Caco-2 (cell line): ENCODE measurements at regions of chr17 and their contacts with region 1.

Region 1: DNA sequence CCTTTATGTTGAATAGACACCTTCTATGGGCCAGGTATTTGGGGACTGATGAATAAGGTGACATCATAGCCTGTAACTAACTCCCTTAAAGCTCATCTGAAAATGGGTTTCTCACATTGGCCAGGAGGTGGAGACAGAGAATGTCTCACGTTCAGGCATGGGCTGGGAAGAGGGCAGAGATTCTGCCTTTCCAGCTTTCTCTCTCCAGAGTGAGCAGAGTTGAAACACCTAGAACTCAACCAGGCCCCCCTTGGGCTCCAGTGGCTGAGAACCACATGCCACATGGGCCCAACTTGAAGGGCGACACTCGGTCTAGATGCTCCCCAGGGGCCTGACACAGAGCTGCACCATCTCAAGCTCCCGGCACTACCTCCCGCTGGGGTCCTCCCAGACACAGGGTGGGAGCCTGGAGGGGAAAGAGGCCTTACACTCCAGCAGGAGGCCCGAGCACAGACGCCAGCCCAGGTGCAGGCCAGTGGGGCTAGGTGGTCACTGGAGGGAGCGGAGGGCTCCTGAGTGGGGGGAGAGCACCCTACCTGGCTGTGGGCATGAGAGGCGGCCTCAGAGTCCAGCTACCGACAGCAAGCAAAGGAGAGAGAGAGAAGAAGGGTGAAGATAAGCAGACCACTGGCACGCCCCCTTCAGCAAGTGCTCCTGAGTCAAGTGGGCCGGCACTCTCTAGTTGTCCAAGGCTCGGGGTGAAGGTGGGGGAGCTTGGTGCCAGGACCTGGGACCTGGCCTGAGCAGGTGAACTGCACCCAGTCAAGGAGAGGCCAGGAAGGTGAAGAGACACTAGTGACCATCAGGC is 55.9 kb downstream of the MYO18A start:
- DNase-seq: peak; percentile 67 to 70
- H3K4me3 ChIP-seq: no peak overlapping the region
- H3K4me3 Mint-ChIP-seq: no peak overlapping the region
- H3K27ac Mint-ChIP-seq: no peak overlapping the region
- H3K4me1 ChIP-seq: no peaks in the 10 kb centered on the region
- H3K4me1 Mint-ChIP-seq: no peaks in the 10 kb centered on the region
- H3K27me3 ChIP-seq: no peaks in the 10 kb centered on the region
- H3K27me3 Mint-ChIP-seq: no peaks in the 10 kb centered on the region
- CTCF ChIP-seq: peak; percentile 65 to 81

Region 2: DNA sequence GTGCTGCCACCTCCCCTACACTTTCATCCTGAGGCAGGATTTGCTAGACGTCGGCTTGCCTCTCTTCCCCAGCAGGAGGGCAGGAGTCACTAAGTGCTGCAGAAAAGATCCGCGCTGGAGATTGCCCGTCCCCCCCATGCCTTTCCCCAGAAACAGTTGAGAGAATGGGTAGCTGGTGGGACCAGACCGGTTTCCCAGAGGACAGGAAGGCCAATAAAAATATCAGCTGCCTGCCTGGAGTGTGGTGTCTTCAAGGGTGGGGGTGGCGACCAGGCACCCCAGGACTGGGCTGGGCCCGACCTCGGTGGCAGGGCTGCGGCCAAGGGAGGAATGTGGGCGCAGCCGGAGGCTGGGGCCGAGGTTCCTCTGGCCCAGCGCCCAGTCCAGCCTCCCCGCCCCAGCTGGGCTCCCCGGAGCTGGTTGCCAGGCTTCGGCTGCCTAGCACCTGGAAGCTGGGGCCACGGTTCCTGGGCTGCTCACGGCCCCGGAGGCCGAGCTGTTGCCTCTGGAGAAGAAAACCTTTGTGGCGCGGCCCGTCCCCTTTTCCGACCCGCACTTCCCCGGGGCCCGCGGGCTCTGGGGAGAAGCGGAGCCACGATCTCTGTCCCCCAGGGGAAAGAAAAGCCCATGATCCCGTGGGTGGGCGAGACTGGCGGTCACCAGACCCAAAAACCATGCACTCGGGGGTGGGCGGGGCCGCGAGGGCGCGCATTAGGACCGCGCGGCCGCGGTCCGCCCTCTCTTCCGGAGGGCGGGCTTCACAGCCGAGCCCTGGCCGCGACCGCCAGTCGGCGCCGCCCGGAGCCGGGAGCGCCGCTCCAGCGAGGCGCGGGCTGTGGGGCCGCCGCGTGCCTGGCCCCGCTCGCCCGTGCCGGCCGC is 380.9 kb before region 1 on chr17 and contains the start of gene TRAF4:
- CTCF ChIA-PET with region 1: no interaction called
- POLR2A ChIA-PET with region 1: no interaction called
- intact Hi-C with region 1: no loop called
- DNase-seq: peak; percentile 83 to 91
- H3K4me3 ChIP-seq: peak within 1 kb of the TSS; percentile 68
- H3K4me3 Mint-ChIP-seq: peak within 1 kb of the TSS; percentile 95
- H3K27ac Mint-ChIP-seq: peak within 1 kb of the TSS; percentile 96
- H3K4me1 ChIP-seq: peaks cover 40% of the 10 kb centered on the region
- H3K4me1 Mint-ChIP-seq: peaks cover 12% of the 10 kb centered on the region
- H3K27me3 ChIP-seq: no peaks in the 10 kb centered on the region
- H3K27me3 Mint-ChIP-seq: no peaks in the 10 kb centered on the region
- CTCF ChIP-seq: peak in 1 of 2 experiments; percentile 18
- total RNA-seq, gene TRAF4: 140 and 154 TPM in 2 replicates

Region 3: GRCh38 chr17:29005936-29006511 is 118.3 kb before region 1 on chr17 and contains the start of gene SEZ6:
- CTCF ChIA-PET with region 1: no interaction called
- POLR2A ChIA-PET with region 1: no interaction called
- intact Hi-C with region 1: no loop called
- DNase-seq: peak; percentile 82 to 92
- H3K4me3 ChIP-seq: no peak within 1 kb of the TSS
- H3K4me3 Mint-ChIP-seq: no peak within 1 kb of the TSS
- H3K27ac Mint-ChIP-seq: no peak within 1 kb of the TSS
- H3K4me1 ChIP-seq: peaks cover 5% of the 10 kb centered on the region; the same call in 1 of the 2 replicates
- H3K4me1 Mint-ChIP-seq: no peaks in the 10 kb centered on the region
- H3K27me3 ChIP-seq: no peaks in the 10 kb centered on the region; the same call in 1 of the 2 replicates
- H3K27me3 Mint-ChIP-seq: peaks cover 26% of the 10 kb centered on the region
- CTCF ChIP-seq: no peak
- total RNA-seq, gene SEZ6: not detected in 2 replicates

Region 4: DNA sequence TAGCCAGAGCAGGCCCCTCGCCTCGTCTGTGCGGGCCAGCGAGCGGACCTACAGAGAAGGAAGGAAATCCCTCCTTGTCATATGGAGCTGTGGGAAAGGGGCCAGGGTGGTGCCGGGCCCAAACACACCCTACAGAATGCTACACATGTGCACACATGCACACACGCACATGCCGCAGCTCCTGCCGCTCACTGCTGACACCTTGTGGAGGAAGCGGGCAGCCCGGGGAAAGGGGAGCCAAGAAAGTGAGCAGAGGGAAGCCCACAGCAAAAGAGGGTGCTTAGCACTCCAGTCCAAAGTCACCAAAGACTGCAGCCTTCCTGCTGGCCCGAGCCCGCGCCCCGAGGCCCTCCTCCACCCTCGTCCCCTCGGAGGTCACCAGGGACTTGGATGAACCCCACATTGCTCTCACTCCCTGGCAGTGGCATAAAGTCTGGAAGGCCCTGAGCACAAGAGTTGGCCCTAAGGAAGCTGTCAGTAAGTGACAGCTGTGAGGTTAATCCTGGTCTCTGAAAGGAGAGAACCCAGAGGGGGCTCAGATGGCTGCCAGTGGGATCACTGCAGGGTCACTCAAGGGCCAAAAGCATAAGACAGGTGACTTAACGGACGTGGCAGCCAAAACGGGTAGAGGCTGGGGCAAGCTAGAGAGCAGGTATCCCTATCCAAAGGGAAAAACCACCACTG is 12.4 kb before region 1 on chr17:
- CTCF ChIA-PET with region 1: interaction called, 29 read pairs
- POLR2A ChIA-PET with region 1: no interaction called
- intact Hi-C with region 1: no loop called
- DNase-seq: peak; percentile 65 to 84
- H3K4me3 ChIP-seq: no peak overlapping the region
- H3K4me3 Mint-ChIP-seq: no peak overlapping the region
- H3K27ac Mint-ChIP-seq: no peak overlapping the region
- H3K4me1 ChIP-seq: peaks cover 9% of the 10 kb centered on the region
- H3K4me1 Mint-ChIP-seq: no peaks in the 10 kb centered on the region
- H3K27me3 ChIP-seq: no peaks in the 10 kb centered on the region
- H3K27me3 Mint-ChIP-seq: no peaks in the 10 kb centered on the region
- CTCF ChIP-seq: peak; percentile 86 to 98

Region 5: DNA sequence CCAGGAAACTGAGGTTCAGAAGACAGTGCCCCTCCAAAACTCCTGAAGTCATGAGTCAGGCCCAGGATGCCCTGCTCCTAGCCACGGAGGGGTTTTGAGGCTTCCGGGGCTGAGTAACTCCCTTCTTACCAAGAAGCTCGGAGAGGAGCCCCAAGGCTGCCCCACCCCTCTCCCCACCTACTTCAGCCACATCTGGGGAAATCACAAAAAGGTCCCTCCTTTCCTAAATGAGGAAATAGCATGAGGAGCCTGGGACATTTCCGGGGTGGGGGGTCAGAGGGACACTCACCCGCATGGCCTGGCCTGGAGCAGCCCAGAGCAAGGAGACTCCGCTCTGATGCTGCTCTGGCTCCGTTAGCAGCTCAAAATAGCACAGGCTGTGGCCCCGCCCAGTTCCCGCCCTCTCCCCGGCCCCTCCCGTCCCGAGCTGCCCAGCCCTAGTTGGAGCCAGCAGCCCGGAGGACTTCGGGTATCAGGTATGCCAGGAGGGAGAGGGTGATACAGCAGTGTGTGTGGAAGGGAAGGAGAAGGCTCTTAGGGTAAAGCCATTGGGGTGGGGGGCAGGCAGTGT is 15.8 kb after region 1 on chr17:
- CTCF ChIA-PET with region 1: interaction called, 47 read pairs
- POLR2A ChIA-PET with region 1: no interaction called
- intact Hi-C with region 1: loop called (anchors 1 kb)
- DNase-seq: no peak
- H3K4me3 ChIP-seq: no peak overlapping the region
- H3K4me3 Mint-ChIP-seq: no peak overlapping the region
- H3K27ac Mint-ChIP-seq: no peak overlapping the region
- H3K4me1 ChIP-seq: peaks cover 8% of the 10 kb centered on the region; the same call in 1 of the 2 replicates
- H3K4me1 Mint-ChIP-seq: no peaks in the 10 kb centered on the region
- H3K27me3 ChIP-seq: no peaks in the 10 kb centered on the region
- H3K27me3 Mint-ChIP-seq: no peaks in the 10 kb centered on the region
- CTCF ChIP-seq: no peak

Region 6: GRCh38 chr17:29219378-29220047 is 95.2 kb after region 1 on chr17:
- CTCF ChIA-PET with region 1: interaction called, 21 read pairs
- POLR2A ChIA-PET with region 1: no interaction called
- intact Hi-C with region 1: no loop called
- DNase-seq: peak; percentile 86 to 92
- H3K4me3 ChIP-seq: no peak overlapping the region
- H3K4me3 Mint-ChIP-seq: no peak overlapping the region
- H3K27ac Mint-ChIP-seq: no peak overlapping the region
- H3K4me1 ChIP-seq: peaks cover 10% of the 10 kb centered on the region; the same call in 1 of the 2 replicates
- H3K4me1 Mint-ChIP-seq: peaks cover 7% of the 10 kb centered on the region
- H3K27me3 ChIP-seq: no peaks in the 10 kb centered on the region
- H3K27me3 Mint-ChIP-seq: no peaks in the 10 kb centered on the region
- CTCF ChIP-seq: peak; percentile 91 to 97

Region 7: GRCh38 chr17:30554839-30555751 is 1430.8 kb after region 1 on chr17:
- CTCF ChIA-PET with region 1: no interaction called
- POLR2A ChIA-PET with region 1: no interaction called
- intact Hi-C with region 1: no loop called
- DNase-seq: peak; percentile 67 to 69
- H3K4me3 ChIP-seq: no peak overlapping the region
- H3K4me3 Mint-ChIP-seq: no peak overlapping the region
- H3K27ac Mint-ChIP-seq: no peak overlapping the region
- H3K4me1 ChIP-seq: no peaks in the 10 kb centered on the region
- H3K4me1 Mint-ChIP-seq: peaks cover 19% of the 10 kb centered on the region
- H3K27me3 ChIP-seq: no peaks in the 10 kb centered on the region
- H3K27me3 Mint-ChIP-seq: no peaks in the 10 kb centered on the region
- CTCF ChIP-seq: peak; percentile 17 to 24